Ascending aorta (tissue), 2 donors: ENCODE measurements at regions of chr15 and their contacts with region 1.

Region 1: GRCh38 chr15:68608206-68608843 is 29.5 kb downstream of the CORO2B start:
- DNase-seq: peak; percentile 28 to 88
- H3K4me3 ChIP-seq: no peak overlapping the region
- H3K27ac ChIP-seq: peak overlapping the region; percentile 74 to 80
- H3K4me1 ChIP-seq: peaks cover 15 to 27% of the 10 kb centered on the region in 2 donors
- H3K27me3 ChIP-seq: no peaks in the 10 kb centered on the region
- CTCF ChIP-seq: no peak

Region 2: GRCh38 chr15:68589783-68590710 is 18.3 kb before region 1 on chr15:
- intact Hi-C with region 1: loop called (anchors 2 kb)
- DNase-seq: no peak
- H3K4me3 ChIP-seq: no peak overlapping the region
- H3K27ac ChIP-seq: peak overlapping the region; percentile 63 to 65
- H3K4me1 ChIP-seq: peaks cover 0 to 16% of the 10 kb centered on the region in 2 donors
- H3K27me3 ChIP-seq: no peaks in the 10 kb centered on the region
- CTCF ChIP-seq: no peak